Posterior vena cava (tissue), 2 donors: ENCODE measurements at regions of chr16 and their contacts with region 1.

Region 1: DNA sequence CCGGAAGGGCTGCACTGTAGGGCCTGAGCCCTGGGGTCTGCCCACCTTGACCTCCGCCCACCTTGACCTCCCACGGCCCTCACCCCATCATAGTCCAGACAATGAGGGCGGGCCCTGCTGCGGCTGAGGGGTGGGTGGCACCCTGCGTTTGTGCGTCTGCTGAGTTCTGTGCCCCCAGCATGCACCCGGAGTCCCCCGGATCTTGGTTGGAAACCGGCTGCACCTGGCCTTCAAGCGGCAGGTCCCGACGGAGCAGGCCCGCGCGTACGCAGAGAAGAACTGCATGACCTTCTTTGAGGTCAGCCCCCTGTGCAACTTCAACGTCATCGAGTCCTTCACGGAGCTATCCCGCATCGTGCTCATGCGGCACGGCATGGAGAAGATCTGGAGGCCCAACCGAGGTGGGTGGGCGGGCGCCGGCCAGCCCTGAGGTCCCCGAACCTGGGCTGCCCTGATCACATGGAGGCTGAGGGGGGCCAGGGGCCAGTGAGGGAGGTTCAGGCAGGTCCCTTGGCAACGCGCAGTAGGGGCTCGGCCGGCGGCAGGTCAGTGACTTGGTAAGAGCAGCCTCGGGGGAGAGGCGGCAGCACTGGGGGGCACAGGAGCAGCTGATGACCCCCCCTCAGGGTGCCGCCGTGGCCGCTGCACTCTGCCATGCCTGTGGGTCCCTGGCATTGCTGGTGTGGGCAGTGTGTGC is 4.9 kb upstream of the WFIKKN1 start:
- DNase-seq: no peak

Region 2: DNA sequence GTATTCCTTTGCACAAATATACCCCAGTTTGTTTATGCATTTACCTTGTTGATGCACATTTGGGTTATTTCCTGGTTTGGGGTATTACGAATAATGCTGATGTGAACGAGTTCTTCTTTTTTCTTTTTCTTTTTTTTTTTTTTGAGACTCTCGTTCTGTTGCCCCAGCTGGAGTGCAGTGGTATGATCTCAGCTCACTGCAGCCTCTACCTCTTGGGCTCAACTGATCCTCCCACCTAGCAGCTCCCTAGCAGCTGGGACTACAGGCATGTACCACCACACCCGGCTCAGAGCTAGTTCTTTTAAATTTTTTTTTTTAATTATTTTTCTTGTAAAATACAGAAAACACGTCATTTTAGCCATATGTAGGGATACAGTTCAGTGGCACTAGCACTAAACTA is 21.9 kb before region 1 on chr16:
- intact Hi-C with region 1: loop called in 1 of 2 experiments (anchors 2 kb)
- DNase-seq: no peak

Region 3: GRCh38 chr16:931626-932500 is 306.0 kb after region 1 on chr16:
- intact Hi-C with region 1: no loop called
- DNase-seq: no peak